ENCODE measurements at regions of chr1 and their contacts with region 1.

Region 1: GRCh38 chr1:5286244-5286643 is 631.8 kb downstream of the AJAP1 start:
- DNase-seq: peak; percentile 66
- H3K4me3 Mint-ChIP-seq: no peak overlapping the region
- H3K27ac Mint-ChIP-seq: no peak overlapping the region
- H3K4me1 Mint-ChIP-seq: no peaks in the 10 kb centered on the region
- H3K27me3 Mint-ChIP-seq: peaks cover 17% of the 10 kb centered on the region

Region 2: GRCh38 chr1:4362314-4363044 is 923.8 kb before region 1 on chr1:
- CTCF ChIA-PET with region 1: no interaction called
- DNase-seq: no peak
- H3K4me3 Mint-ChIP-seq: no peak overlapping the region
- H3K27ac Mint-ChIP-seq: no peak overlapping the region
- H3K4me1 Mint-ChIP-seq: no peaks in the 10 kb centered on the region
- H3K27me3 Mint-ChIP-seq: no peaks in the 10 kb centered on the region

Region 3: DNA sequence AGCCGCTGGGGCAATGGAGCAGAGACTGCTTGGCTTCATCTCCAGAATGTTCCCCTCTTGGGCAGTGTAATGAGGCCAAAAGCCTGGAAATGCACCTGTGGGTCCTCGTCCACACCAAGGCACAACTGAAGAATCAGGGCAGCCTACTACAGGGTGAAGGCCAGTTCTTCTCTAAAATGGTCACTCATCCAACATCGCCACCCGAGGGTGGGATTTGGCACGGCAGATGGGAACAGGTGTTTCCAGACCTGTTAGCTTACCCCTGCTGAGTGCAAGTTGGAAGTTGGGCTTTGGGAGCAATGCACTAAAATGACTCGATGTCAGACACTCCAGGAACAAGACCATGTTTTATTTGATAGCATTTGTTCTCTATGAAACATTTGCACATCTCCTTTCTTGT is 162.2 kb after region 1 on chr1:
- CTCF ChIA-PET with region 1: interaction called, 18 read pairs
- DNase-seq: peak; percentile 62
- H3K4me3 Mint-ChIP-seq: no peak overlapping the region
- H3K27ac Mint-ChIP-seq: no peak overlapping the region
- H3K4me1 Mint-ChIP-seq: no peaks in the 10 kb centered on the region
- H3K27me3 Mint-ChIP-seq: peaks cover 24% of the 10 kb centered on the region

Measured in activated naive CD4-positive, alpha-beta T cell treated with anti-CD3 and anti-CD28 coated beads, Interleukin-2, amount 10 ng/mL, durations not matched to agents 7 days and 5 days (primary cell).